Activated CD4-positive, alpha-beta memory T cell treated with anti-CD3 and anti-CD28 coated beads for 36 hours (primary cell): ENCODE measurements at regions of chr4 and their contacts with region 1.

Region 1: DNA sequence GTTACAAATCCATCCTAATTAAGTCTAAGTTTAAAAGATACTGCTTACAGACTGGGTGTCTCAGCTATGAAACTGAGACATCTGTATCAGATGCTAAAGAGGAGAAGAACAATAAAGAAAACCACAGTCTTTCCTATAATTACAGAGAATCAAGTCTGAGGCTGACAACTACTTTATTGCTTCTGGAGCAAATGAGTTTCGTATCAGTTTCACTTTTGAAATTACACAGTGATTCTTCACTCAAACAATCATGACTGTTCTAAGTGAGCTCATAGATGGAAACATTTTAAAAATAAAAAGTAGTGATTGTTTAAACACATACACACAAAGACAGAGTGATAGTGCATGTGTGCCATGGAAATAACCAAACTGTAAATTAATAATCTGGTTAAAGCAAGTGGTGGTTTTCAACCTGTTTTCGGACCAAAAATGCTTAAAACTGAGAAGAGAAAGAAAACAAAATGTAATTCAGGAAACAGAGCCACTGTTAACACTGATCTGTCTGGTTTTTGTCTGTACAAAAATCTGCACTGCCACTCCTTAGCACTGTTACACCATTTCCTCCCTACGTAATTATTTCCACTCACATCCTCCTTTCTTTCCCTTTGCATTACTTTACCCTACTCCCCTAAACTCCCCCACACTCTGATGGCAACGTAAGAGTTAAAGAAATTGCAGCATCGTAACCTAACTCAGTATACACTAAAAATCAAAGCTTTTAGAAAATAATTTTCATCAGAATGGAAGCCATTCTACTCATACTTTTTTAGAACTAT is 12.5 kb downstream of the RFC1 start:
- DNase-seq: no peak
- H3K4me3 Mint-ChIP-seq: peak overlapping the region; percentile 60
- H3K27ac Mint-ChIP-seq: peak overlapping the region; percentile 94
- H3K4me1 Mint-ChIP-seq: peaks cover 75% of the 10 kb centered on the region
- H3K27me3 Mint-ChIP-seq: no peaks in the 10 kb centered on the region

Region 2: DNA sequence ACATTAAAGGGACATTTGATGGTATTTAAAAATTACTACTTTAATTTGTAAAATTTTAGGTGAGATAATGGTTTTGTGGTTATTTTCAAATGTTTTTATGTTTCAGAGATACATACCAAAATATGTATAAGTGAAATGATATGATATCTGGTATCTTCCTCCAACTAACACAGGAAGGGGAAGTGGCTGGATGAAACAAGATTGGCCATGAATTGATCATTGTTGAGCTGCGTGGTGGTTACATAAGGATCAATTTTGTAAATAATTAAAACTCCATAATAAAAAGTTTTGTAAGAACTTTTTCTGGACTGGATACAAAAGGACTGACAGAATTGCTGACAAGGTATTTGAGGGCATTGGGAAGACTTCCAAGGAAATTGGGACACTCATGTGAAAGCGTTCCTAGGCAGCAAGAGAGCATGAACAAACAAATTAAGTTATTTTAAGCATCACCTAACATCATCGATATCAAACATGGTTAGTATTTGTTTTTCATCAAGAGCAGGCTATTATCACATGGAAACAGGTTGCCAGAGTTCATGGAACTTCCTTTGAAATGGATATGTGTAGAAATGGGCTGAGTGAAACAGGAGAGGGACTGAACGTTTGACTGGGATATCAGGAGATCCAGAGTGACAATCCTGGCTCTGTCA is 1531.6 kb before region 1 on chr4:
- CTCF ChIA-PET with region 1: no interaction called
- POLR2A ChIA-PET with region 1: no interaction called
- intact Hi-C with region 1: no loop called
- DNase-seq: no peak
- H3K4me3 Mint-ChIP-seq: no peak overlapping the region
- H3K27ac Mint-ChIP-seq: no peak overlapping the region
- H3K4me1 Mint-ChIP-seq: peaks cover 8% of the 10 kb centered on the region
- H3K27me3 Mint-ChIP-seq: no peaks in the 10 kb centered on the region

Region 3: GRCh38 chr4:38529189-38530115 is 824.2 kb before region 1 on chr4:
- CTCF ChIA-PET with region 1: no interaction called
- POLR2A ChIA-PET with region 1: no interaction called
- intact Hi-C with region 1: loop called (anchors 10 kb)
- DNase-seq: peak; percentile 88
- H3K4me3 Mint-ChIP-seq: peak overlapping the region; percentile 15
- H3K27ac Mint-ChIP-seq: peak overlapping the region; percentile 85
- H3K4me1 Mint-ChIP-seq: peaks cover 42% of the 10 kb centered on the region
- H3K27me3 Mint-ChIP-seq: peaks cover 11% of the 10 kb centered on the region

Region 4: DNA sequence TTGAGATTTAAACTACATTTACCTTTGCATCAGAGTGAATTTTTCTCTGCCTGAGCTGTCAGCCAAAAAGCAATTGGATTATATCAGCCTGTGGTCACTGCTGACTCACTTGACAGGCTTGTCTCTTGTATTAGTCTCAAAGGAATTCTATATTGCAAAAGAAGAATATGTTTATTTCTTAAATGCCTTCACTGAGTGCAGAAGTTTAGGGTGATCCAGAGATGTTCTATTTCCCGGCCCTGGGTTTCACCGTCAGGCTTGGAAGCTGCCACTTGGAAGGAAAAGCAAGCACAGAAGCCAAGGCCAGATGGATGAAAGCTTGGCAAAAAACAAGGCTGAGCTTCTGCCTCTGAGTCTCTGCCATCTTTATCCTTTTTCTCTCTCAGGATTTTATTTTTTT is 405.1 kb before region 1 on chr4:
- CTCF ChIA-PET with region 1: no interaction called
- POLR2A ChIA-PET with region 1: no interaction called
- intact Hi-C with region 1: loop called (anchors 10 kb)
- DNase-seq: no peak
- H3K4me3 Mint-ChIP-seq: no peak overlapping the region
- H3K27ac Mint-ChIP-seq: peak overlapping the region; percentile 82
- H3K4me1 Mint-ChIP-seq: peaks cover 52% of the 10 kb centered on the region
- H3K27me3 Mint-ChIP-seq: peaks cover under 1% of the 10 kb centered on the region

Region 5: DNA sequence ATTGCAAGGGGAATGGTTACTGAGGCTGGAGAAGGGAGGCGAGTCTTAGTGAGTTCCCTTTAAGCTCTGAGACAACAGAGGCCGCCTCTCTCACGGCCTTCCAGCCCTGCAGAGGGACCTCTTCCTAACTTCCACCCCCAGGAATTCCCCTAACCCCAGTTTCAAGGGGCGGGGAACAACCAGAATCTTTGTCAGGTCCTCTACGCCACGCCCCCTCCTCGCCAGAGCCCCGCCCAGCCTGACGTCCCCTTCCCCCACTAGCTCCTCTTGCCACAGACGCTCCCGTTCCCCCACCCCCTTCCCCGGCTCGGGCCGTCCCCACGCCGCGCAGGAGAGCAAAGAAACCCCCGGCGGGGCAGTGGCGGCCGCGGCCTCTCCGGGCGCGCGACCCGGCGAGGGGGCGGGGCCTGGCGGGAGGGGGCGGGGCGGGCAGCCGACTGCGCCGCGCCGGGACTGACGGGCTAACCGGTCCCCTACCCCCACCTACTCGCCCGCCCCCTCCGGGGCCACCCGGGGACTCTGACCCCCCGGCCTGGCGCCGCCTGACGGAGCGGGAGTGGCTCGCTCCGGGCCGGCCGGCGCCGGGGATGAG is 309.2 kb before region 1 on chr4:
- CTCF ChIA-PET with region 1: no interaction called
- POLR2A ChIA-PET with region 1: interaction called, 4 read pairs
- intact Hi-C with region 1: loop called (anchors 2 kb)
- DNase-seq: peak; percentile 99
- H3K4me3 Mint-ChIP-seq: peak overlapping the region; percentile 75
- H3K27ac Mint-ChIP-seq: peak overlapping the region; percentile 88
- H3K4me1 Mint-ChIP-seq: peaks cover 50% of the 10 kb centered on the region
- H3K27me3 Mint-ChIP-seq: no peaks in the 10 kb centered on the region

Region 6: GRCh38 chr4:39365830-39366771 is 12.4 kb after region 1 on chr4 and contains the start of gene RFC1:
- CTCF ChIA-PET with region 1: interaction called, 9 read pairs
- POLR2A ChIA-PET with region 1: interaction called, 68 read pairs
- intact Hi-C with region 1: loop called (anchors 1 kb)
- DNase-seq: peak; percentile 96
- H3K4me3 Mint-ChIP-seq: peak within 1 kb of the TSS; percentile 93
- H3K27ac Mint-ChIP-seq: peak within 1 kb of the TSS; percentile 92
- H3K4me1 Mint-ChIP-seq: peaks cover 42% of the 10 kb centered on the region
- H3K27me3 Mint-ChIP-seq: no peaks in the 10 kb centered on the region
- total RNA-seq, gene RFC1: 86.7 to 89.4 TPM

Region 7: DNA sequence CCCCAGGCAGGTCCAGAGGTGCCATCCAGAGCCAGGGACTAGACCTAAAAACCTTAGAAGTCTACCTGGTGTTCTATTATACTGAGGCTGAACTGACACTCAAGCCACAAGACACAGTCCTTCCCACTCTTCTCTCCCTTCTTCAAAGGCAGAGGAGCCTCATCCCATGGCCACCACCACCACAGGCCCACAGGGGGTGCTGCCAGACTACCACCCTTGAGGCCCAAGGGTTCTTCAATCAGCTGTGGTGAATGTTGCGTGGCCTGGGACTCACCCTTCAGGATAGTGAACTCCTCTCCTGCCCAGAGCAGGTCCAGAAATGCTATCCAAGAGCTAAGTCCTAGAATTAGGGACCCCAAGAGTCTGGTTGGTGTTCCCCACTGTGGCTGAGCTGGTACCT is 30.0 kb after region 1 on chr4:
- CTCF ChIA-PET with region 1: no interaction called
- POLR2A ChIA-PET with region 1: no interaction called
- intact Hi-C with region 1: no loop called
- DNase-seq: no peak
- H3K4me3 Mint-ChIP-seq: no peak overlapping the region
- H3K27ac Mint-ChIP-seq: no peak overlapping the region
- H3K4me1 Mint-ChIP-seq: no peaks in the 10 kb centered on the region
- H3K27me3 Mint-ChIP-seq: peaks cover 5% of the 10 kb centered on the region

Region 8: GRCh38 chr4:39527273-39528060 is 173.8 kb after region 1 on chr4 and contains the start of gene UGDH:
- CTCF ChIA-PET with region 1: no interaction called
- POLR2A ChIA-PET with region 1: no interaction called
- intact Hi-C with region 1: loop called (anchors 10 kb)
- DNase-seq: peak; percentile 94
- H3K4me3 Mint-ChIP-seq: peak within 1 kb of the TSS; percentile 99
- H3K27ac Mint-ChIP-seq: peak within 1 kb of the TSS; percentile 90
- H3K4me1 Mint-ChIP-seq: peaks cover 18% of the 10 kb centered on the region
- H3K27me3 Mint-ChIP-seq: no peaks in the 10 kb centered on the region
- total RNA-seq, gene UGDH: 28.7 to 32.9 TPM

Region 9: DNA sequence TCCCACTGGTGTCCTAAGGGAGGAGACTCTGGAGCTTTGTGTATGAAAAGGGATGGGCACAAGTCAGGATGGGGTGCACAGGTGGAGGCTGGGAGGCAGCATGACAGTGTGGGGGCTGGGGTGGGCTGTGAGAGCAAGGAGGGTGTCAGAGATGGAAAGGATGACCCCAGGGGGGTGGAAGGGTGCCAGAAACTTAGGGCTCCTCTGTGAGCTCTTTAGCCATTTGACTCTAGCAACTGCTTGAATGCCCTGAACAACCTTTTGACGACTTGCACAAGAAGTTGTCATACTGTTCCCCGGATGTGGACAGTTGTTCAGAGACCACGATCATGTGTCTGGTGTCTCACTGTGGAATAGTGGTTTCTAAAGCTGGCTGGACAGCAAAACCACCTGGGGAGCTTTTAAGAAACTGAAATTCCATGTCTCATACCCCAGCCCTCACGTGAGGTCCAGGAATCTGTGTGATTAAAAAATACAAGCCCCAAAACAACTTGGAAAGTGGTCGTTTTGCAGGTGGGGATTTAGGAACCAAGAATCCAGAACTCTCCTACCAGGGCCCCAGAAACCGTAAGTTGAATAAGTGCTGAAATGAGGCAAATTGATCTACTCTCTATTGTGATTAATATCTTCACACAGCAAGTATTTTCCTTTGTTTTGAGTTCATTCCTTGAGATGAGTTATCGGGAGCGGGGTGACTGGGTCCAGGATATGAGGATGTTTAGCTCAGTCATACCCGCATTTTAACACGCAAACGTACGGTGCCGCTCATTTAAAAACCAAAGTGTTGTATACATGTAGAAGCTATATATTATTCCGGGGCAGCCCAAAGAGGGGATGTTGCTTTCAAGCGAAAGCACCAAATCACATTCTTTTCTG is 846.6 kb after region 1 on chr4:
- CTCF ChIA-PET with region 1: no interaction called
- POLR2A ChIA-PET with region 1: interaction called, 3 read pairs
- intact Hi-C with region 1: loop called (anchors 2 kb)
- DNase-seq: peak; percentile 91
- H3K4me3 Mint-ChIP-seq: peak overlapping the region; percentile 93
- H3K27ac Mint-ChIP-seq: peak overlapping the region; percentile 98
- H3K4me1 Mint-ChIP-seq: peaks cover 39% of the 10 kb centered on the region
- H3K27me3 Mint-ChIP-seq: no peaks in the 10 kb centered on the region